ENCODE measurements at regions of chr17 and their contacts with region 1.

Region 1: GRCh38 chr17:31269578-31269983 is 27.5 kb downstream of the OMG start:
- DNase-seq: peak; percentile 70 to 85
- H3K4me3 ChIP-seq: no peak overlapping the region; the same call in 1 of the 2 replicates
- H3K27ac ChIP-seq: peak overlapping the region; percentile 67
- H3K4me1 ChIP-seq: peaks cover 33% of the 10 kb centered on the region
- H3K27me3 ChIP-seq: no peaks in the 10 kb centered on the region
- CTCF ChIP-seq: no peak

Region 2: DNA sequence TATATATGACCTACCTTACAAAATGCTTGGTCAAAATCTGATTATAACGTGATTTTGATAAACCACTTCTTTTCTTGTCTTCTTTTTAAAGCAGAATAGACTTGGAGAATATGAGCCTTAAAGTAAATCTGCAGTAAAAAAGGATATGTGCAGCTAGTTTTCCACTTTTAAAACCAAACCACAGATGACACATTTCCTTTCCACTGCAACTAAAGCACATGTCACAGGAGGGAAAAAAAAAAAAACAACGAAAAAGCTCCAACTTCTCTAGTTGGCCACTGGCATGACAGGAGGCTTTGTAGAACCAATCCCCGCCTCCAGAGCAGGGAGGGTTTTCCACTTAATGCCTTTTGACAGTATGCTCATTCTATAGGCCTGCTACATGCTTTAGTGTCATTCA is 51.9 kb after region 1 on chr17 and contains the start of gene EVI2A:
- CTCF ChIA-PET with region 1: no interaction called
- POLR2A ChIA-PET with region 1: interaction called, 15 read pairs
- intact Hi-C with region 1: no loop called
- DNase-seq: no peak
- H3K4me3 ChIP-seq: no peak within 1 kb of the TSS
- H3K27ac ChIP-seq: no peak within 1 kb of the TSS
- H3K4me1 ChIP-seq: no peaks in the 10 kb centered on the region
- H3K27me3 ChIP-seq: no peaks in the 10 kb centered on the region
- CTCF ChIP-seq: no peak
- total RNA-seq, gene EVI2A: not detected in 2 replicates

Region 3: DNA sequence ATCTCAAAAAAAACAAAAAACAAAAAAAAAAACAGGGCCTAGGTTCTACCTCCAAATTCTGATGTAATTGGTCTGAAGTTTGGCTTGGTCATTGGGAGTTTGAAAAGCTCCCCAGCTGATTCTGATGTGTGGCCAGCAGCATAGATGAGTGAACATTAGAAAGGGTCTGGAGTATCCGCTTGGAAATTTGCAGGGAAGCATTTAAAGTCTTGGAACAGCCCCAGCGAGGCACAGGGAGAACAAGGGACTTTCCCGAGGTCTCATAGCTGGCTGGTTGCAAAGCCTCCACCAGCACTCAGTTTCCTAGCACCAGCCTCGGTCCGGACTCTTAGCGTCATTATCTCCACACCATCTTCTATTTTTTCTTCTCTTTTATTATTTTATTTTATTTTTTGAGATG is 192.7 kb after region 1 on chr17:
- CTCF ChIA-PET with region 1: no interaction called
- POLR2A ChIA-PET with region 1: interaction called, 14 read pairs
- intact Hi-C with region 1: no loop called
- DNase-seq: no peak
- H3K4me3 ChIP-seq: no peak overlapping the region
- H3K27ac ChIP-seq: no peak overlapping the region
- H3K4me1 ChIP-seq: peaks cover 12% of the 10 kb centered on the region
- H3K27me3 ChIP-seq: no peaks in the 10 kb centered on the region
- CTCF ChIP-seq: no peak

Measured in PC-9 (cell line).